ENCODE measurements at regions of chr17 and their contacts with region 1.

Region 1: GRCh38 chr17:49707608-49708514 is at the start of gene SLC35B1:
- DNase-seq: peak; percentile 99
- ATAC-seq: peak; percentile 99
- H3K4me3 ChIP-seq: peak within 1 kb of the TSS; percentile 84 to 99 (median 93)
- H3K27ac ChIP-seq: peak within 1 kb of the TSS; percentile 87 to 96 (median 94)
- H3K4me1 ChIP-seq: peaks cover 21 to 24% of the 10 kb centered on the region in 2 donors
- H3K27me3 ChIP-seq: no peaks in the 10 kb centered on the region
- CTCF ChIP-seq: peak; percentile 54 to 77 (median 68)
- POLR2A ChIP-seq: peak; percentile 65 to 82
- total RNA-seq, gene SLC35B1: 62.7 to 99.0 (median 84.5) TPM

Region 2: GRCh38 chr17:49414622-49415350 is 293.1 kb before region 1 on chr17 and contains the start of gene PHB1:
- in situ Hi-C with region 1: loop called in 1 of 4 experiments (anchors 25 kb)
- intact Hi-C with region 1: loop called (anchors 10 kb)
- DNase-seq: peak; percentile 97
- ATAC-seq: peak; percentile 99 to 100
- H3K4me3 ChIP-seq: peak within 1 kb of the TSS; percentile 63 to 97 (median 93)
- H3K27ac ChIP-seq: peak within 1 kb of the TSS; percentile 73 to 90 (median 75)
- H3K4me1 ChIP-seq: peaks cover 14 to 18% of the 10 kb centered on the region in 2 donors
- H3K27me3 ChIP-seq: no peaks in the 10 kb centered on the region
- CTCF ChIP-seq: no peak
- POLR2A ChIP-seq: peak in 1 of 2 donors; percentile 32
- total RNA-seq, gene PHB1: 102 to 137 (median 116) TPM

Region 3: GRCh38 chr17:49496183-49496866 is 211.5 kb before region 1 on chr17:
- in situ Hi-C with region 1: no loop called
- intact Hi-C with region 1: loop called (anchors 10 kb)
- DNase-seq: peak; percentile 29 to 48
- ATAC-seq: peak; percentile 70 to 83
- H3K4me3 ChIP-seq: peak overlapping the region; percentile 49 to 67 (median 57)
- H3K27ac ChIP-seq: no peak overlapping the region
- H3K4me1 ChIP-seq: peaks cover 19 to 26% of the 10 kb centered on the region in 2 donors
- H3K27me3 ChIP-seq: peaks cover 34 to 47% (median 38%) of the 10 kb centered on the region in 3 donors
- CTCF ChIP-seq: peak; percentile 75 to 97 (median 92)
- POLR2A ChIP-seq: no peak

Region 4: GRCh38 chr17:49763735-49764558 is 56.1 kb after region 1 on chr17 and contains the start of gene FAM117A:
- in situ Hi-C with region 1: no loop called
- intact Hi-C with region 1: loop called (anchors 5 kb)
- DNase-seq: peak; percentile 94 to 95
- ATAC-seq: peak; percentile 99
- H3K4me3 ChIP-seq: peak within 1 kb of the TSS; percentile 63 to 83 (median 72)
- H3K27ac ChIP-seq: peak within 1 kb of the TSS; percentile 32 to 79 (median 60)
- H3K4me1 ChIP-seq: peaks cover 3 to 8% of the 10 kb centered on the region in 2 donors
- H3K27me3 ChIP-seq: peaks cover 0 to 9% (median 0%) of the 10 kb centered on the region in 3 donors
- CTCF ChIP-seq: peak in 1 of 5 experiments; percentile 18
- POLR2A ChIP-seq: peak in 1 of 2 donors; percentile 68
- total RNA-seq, gene FAM117A: 2.6 to 4.9 (median 3.3) TPM

Region 5: GRCh38 chr17:49779739-49780231 is 71.9 kb after region 1 on chr17:
- in situ Hi-C with region 1: loop called in 1 of 4 experiments (anchors 5 kb)
- intact Hi-C with region 1: no loop called
- DNase-seq: no peak
- ATAC-seq: peak; percentile 68 to 73
- H3K4me3 ChIP-seq: no peak overlapping the region
- H3K27ac ChIP-seq: no peak overlapping the region
- H3K4me1 ChIP-seq: peaks cover 11 to 13% of the 10 kb centered on the region in 2 donors
- H3K27me3 ChIP-seq: no peaks in the 10 kb centered on the region
- CTCF ChIP-seq: peak in 4 of 5 experiments; percentile 35 to 49 (median 44)
- POLR2A ChIP-seq: no peak

Region 6: GRCh38 chr17:49788478-49789242 is 80.8 kb after region 1 on chr17 and contains the start of gene KAT7:
- in situ Hi-C with region 1: loop called in 2 of 4 experiments (anchors 5 kb)
- intact Hi-C with region 1: loop called (anchors 1 kb)
- DNase-seq: peak; percentile 99 to 100
- ATAC-seq: peak; percentile 94 to 96
- H3K4me3 ChIP-seq: peak within 1 kb of the TSS; percentile 87 to 98 (median 92)
- H3K27ac ChIP-seq: peak within 1 kb of the TSS; percentile 97 to 100 (median 99)
- H3K4me1 ChIP-seq: peaks cover 46 to 47% of the 10 kb centered on the region in 2 donors
- H3K27me3 ChIP-seq: no peaks in the 10 kb centered on the region
- CTCF ChIP-seq: no peak
- POLR2A ChIP-seq: peak; percentile 94 to 96
- total RNA-seq, gene KAT7: 32.6 to 49.8 (median 45.2) TPM

Region 7: GRCh38 chr17:49851387-49852291 is 143.8 kb after region 1 on chr17:
- in situ Hi-C with region 1: no loop called
- intact Hi-C with region 1: loop called (anchors 5 kb)
- DNase-seq: peak; percentile 36 to 55
- ATAC-seq: peak; percentile 52 to 63
- H3K4me3 ChIP-seq: peak overlapping the region; percentile 50 to 58 (median 57)
- H3K27ac ChIP-seq: peak overlapping the region in 3 of 4 donors; percentile 5 to 33 (median 28)
- H3K4me1 ChIP-seq: peaks cover 12% of the 10 kb centered on the region in 2 donors
- H3K27me3 ChIP-seq: no peaks in the 10 kb centered on the region
- CTCF ChIP-seq: peak; percentile 45 to 74 (median 59)
- POLR2A ChIP-seq: no peak